ENCODE measurements at regions of chr10 and their contacts with region 1.

Region 1: DNA sequence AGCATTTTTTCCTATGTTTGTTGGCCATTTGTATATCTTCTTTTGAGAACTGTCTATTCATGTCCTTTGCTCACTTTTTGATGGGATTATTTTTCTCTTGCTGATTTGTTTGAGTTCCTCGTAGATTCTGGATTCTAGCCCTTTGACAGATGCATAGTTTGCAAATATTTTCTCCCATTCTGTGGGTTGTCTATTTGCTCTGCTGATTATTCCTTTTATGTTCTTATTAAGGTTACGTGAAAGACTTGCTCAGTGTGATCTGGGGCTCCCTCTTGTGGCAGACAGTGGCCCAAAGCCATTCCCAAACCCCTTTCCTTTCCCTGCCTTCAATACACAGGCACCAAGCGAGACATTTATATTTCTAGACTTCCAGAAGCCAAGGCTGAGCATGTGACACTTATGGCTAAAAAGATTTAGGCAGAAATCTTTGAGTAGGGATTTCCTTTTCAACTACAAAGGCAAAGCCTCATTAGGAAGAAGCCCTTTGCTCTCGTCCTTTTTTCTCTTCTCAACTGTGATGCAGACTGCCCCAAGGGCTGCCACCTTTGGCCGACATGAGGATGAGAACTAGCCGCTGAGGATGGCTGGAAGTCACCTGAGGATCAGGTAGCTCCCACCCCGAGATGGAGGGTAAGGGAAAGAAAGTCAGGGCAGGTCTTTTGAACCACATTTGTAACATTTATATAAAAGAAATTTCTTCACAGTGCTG is 23.6 kb downstream of the ST8SIA6 start:
- DNase-seq: peak; percentile 53 to 68
- ATAC-seq: peak in 3 of 4 donors; percentile 54 to 82 (median 71)
- H3K4me3 ChIP-seq: no peak overlapping the region
- H3K27ac ChIP-seq: no peak overlapping the region
- H3K4me1 ChIP-seq: no peaks in the 10 kb centered on the region
- H3K27me3 ChIP-seq: peaks cover 0 to 13% (median 0%) of the 10 kb centered on the region in 3 donors
- CTCF ChIP-seq: peak; percentile 87

Region 2: DNA sequence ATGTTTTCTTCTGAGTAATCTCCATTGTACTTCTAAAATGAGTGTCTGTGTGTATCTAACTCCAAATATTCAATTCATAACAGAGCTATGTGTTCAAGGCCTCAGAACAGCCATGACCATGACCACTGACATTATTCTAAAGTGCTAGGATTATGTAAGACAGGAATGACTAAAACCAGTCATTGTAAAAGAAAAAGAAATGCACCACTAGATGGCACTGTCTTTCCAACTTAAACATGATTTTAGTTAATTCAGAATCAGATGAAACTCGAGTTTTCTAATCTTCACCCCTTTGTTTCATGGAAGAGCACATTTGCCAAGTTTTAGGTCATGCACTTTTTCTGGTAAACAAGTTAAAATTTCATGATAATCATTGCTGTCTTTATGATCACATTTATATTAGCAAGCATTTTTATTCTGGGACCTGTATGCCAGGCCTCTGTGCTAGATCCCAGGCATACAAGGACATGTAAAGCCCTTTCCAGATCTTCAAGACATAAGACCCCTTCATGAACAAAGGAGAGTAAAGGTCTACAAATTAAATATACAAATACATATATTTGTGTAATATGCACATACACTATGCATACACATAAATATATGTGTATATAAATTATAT is 587.4 kb before region 1 on chr10:
- intact Hi-C with region 1: loop called (anchors 5 to 10 kb)
- DNase-seq: no peak
- ATAC-seq: peak in 3 of 4 donors; percentile 52 to 77 (median 67)
- H3K4me3 ChIP-seq: no peak overlapping the region
- H3K27ac ChIP-seq: no peak overlapping the region
- H3K4me1 ChIP-seq: no peaks in the 10 kb centered on the region
- H3K27me3 ChIP-seq: no peaks in the 10 kb centered on the region
- CTCF ChIP-seq: peak; percentile 73